K562 (cell line): ENCODE measurements at regions of chr7 and their contacts with region 1.

Region 1: DNA sequence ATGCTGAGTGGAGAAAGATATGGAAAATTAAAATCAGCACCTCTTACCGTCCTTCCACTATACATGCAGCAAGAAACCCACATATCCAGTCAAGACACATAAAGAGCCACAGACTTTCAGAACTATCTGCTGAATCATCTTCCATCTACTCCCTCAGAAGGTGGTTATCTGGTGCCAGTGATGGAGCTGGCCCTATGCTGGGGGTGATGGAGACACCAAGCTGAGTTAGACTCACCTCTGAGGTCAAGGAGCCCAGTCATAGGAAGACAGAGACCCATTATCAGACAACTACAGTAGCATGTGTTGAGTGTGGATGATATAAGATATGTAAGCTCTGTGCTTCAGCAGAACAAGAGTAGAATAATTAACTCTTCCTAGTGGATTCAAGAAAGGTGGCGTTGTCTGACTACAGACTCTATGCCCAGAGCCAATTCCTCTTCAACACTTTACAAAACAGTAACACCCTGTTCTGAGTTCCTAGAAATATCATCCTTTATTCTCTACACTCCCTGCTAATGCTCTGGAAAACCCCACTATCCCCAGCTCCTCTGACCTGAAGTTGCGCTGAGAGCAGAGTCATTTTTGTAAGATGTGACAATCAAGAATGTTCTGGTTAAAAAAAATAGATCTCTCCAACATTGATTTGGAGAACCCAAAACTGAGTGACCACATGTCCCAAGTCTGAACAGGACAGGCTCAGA is 14.3 kb downstream of the CYP3A5 start:
- DNase-seq: peak; percentile 76 to 99 (median 88)
- ATAC-seq: peak; percentile 98
- H3K4me3 ChIP-seq: no peak overlapping the region
- H3K27ac ChIP-seq: peak overlapping the region; percentile 22; the same call in 1 of the 3 replicates
- H3K4me1 ChIP-seq: peaks cover 11 to 34% of the 10 kb centered on the region in 2 experiments; a peak in 4 of 5 replicates
- H3K27me3 ChIP-seq: no peaks in the 10 kb centered on the region
- CTCF ChIP-seq: peak in 2 of 3 experiments; percentile 12 to 59; a peak in 2 of 6 replicates
- EP300 ChIP-seq: peak; percentile 96
- POLR2A ChIP-seq: no peak
- RAD21 ChIP-seq: peak; percentile 29 to 72

Region 2: GRCh38 chr7:99648843-99649242 is 16.6 kb before region 1 on chr7:
- CTCF ChIA-PET with region 1: no interaction called
- POLR2A ChIA-PET with region 1: no interaction called
- in situ Hi-C with region 1: no loop called
- intact Hi-C with region 1: no loop called
- DNase-seq: no peak
- ATAC-seq: no peak
- H3K4me3 ChIP-seq: no peak overlapping the region
- H3K27ac ChIP-seq: no peak overlapping the region
- H3K4me1 ChIP-seq: no peaks in the 10 kb centered on the region
- H3K27me3 ChIP-seq: no peaks in the 10 kb centered on the region
- CTCF ChIP-seq: no peak
- EP300 ChIP-seq: no peak
- POLR2A ChIP-seq: no peak
- RAD21 ChIP-seq: no peak

Region 3: DNA sequence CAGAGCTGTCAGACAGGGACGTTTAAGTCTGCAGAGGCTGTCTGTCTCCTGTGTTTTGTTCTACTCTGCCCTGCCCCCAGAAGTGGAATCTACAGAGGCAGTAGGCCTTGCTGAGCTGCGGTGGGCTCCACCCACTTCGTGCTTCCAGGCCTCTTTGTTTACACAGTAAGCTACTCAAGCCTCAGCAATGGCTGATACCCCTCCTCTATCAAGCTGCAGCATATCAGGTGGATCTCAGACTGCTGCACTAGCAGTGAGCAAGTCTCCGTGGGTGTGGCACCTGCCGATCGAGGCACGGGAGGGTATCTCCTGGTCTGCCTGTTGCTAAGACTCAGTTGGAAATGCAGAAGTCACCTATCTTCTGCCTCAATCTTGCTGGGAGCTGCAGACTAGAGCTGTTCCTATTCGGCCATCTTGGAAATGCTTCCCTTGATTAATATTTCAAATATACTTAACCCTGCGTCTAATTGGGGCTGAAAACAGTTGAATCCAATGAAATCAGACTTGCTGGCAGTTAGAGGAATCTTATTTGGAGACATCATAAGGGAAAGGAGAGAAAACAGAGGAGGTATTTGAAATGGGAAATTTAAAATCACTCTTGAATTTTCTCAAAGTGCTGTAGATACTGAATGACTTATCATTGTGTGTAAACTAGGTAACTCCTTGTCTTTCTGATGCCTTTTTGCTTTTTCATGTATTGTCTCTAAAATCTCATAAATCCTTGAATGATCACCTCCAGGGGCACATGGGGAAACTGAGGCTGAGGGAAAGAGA is 28.2 kb after region 1 on chr7:
- CTCF ChIA-PET with region 1: no interaction called
- POLR2A ChIA-PET with region 1: interaction called, 3 read pairs
- in situ Hi-C with region 1: no loop called
- intact Hi-C with region 1: loop called (anchors 1 kb)
- DNase-seq: peak; percentile 78 to 95 (median 82)
- ATAC-seq: peak; percentile 96
- H3K4me3 ChIP-seq: peak overlapping the region; percentile 0; the same call in 1 of the 2 replicates
- H3K27ac ChIP-seq: peak overlapping the region; percentile 66
- H3K4me1 ChIP-seq: peaks cover 14 to 34% of the 10 kb centered on the region in 2 experiments
- H3K27me3 ChIP-seq: no peaks in the 10 kb centered on the region
- CTCF ChIP-seq: no peak
- EP300 ChIP-seq: peak; percentile 74
- POLR2A ChIP-seq: no peak
- RAD21 ChIP-seq: no peak